ENCODE measurements at regions of chr9 and their contacts with region 1.

Region 1: DNA sequence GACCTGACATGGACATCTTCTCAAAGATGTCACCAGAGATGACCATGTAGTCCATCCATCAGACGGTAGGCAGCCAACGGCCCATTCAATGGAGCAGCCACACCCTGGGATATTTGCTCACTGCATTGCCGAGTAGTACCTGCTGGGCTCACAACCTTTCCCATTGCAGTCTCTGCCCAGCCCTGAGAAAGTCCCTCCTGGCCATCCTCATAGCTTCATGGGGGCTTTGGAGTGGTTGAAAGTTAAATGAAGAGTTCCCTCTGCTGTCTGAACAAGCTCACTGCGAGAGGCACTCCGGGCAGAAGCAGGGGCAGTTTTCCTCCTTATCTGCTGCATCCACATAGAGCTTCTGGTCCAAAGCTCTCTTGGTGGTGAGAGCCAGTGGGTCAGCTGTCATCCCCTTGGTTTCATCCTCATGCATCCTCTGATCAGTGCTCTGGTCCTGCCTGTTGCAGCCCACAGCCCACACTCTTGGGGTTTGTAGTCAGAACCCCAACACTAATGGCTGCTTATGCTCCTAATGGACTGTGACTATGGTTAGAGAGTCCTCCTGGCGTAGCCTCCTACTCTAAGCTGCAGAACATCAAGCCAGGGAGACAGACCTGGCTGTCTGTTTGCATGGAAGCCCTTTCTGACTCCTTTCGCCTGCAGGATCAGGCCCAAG is 23.4 kb downstream of the TNFSF8 start:
- DNase-seq: no peak
- H3K4me3 ChIP-seq: no peak overlapping the region
- CTCF ChIP-seq: peak; percentile 75

Region 2: GRCh38 chr9:114405294-114406034 is 501.6 kb before region 1 on chr9:
- CTCF ChIA-PET with region 1: interaction called, 17 read pairs
- POLR2A ChIA-PET with region 1: no interaction called
- DNase-seq: no peak
- H3K4me3 ChIP-seq: no peak overlapping the region
- CTCF ChIP-seq: peak; percentile 82

Region 3: GRCh38 chr9:114671605-114672004 is 235.4 kb before region 1 on chr9:
- CTCF ChIA-PET with region 1: interaction called, 333 read pairs
- POLR2A ChIA-PET with region 1: no interaction called
- DNase-seq: no peak
- H3K4me3 ChIP-seq: no peak overlapping the region
- CTCF ChIP-seq: no peak

Region 4: DNA sequence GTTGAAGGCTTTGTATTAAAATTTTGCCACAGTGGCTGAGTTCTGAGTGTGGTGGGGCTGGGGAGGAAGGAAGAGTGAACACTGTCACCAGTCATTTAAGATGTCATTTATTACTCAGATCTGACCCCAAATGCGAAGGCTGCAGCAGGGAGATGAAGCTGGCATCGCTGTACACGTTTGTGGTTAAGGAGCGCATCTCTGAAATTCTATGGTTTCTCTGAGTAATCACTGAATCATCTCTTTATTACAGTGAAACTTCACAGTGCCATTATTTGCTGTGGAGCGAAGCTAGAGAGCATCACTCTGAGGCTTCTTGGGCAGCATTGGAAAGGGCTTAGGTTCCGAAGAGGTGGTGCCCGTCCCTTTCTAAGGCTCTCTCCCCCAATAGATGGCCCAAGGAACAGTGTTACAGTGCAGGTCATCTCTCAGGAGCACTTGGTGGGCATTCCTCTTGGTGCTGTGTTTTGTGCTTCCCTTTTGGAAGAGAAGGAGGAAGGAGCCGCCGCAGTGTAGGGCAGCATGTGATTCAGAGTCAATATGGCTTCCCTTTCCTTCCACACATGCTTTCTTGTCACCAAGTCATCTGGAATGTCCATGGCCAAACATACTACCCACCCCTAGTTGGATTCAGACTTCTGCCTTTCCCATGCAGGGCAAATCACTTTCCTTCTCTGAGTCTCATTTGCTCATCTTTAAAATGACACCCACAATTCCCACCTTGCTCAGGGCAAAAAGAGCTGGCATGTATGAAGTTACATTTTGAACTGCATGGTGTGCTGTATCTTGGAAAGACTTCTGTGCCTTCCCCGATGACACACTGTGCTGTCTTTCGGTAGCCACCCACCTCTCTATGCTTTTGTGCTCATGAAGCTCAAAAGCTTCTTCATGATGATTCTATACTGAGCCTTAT is 215.7 kb before region 1 on chr9:
- CTCF ChIA-PET with region 1: interaction called, 12 read pairs
- POLR2A ChIA-PET with region 1: no interaction called
- DNase-seq: peak; percentile 52
- H3K4me3 ChIP-seq: no peak overlapping the region; the same call in 1 of the 2 replicates
- CTCF ChIP-seq: no peak

Region 5: DNA sequence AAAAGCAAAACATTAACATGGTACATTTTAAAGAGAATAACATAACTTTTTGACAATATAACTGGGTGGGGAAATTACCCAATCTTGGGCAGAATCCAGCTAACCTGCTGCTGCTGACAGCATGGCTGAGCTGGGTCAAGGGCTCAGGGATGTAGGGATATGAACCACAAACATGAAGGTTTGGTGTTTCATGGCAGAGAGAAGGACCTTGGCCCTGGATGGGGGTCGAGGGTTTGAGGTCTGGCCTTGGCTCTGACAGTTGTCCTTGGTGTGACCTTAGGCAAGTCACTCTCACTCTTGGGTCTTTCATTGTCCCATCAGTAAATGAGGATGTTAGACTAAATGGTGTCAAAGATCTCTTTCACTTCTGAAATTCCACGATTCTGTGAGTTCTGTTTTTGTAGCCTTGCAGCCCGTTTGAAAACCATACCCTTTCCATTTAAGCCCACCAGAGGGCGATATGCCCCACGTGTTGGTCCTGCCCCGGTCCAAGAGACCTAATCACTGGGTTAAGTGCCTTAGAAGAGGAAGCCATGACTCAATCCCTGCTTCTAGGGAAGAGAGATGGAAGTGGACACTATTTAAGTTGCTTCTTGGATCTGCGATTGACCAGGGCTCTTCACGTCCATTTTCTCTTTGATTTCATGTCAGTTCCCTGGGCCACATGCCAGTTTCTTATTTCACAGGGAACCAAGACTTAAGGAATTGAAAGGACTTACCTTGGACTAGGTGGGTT is 168.3 kb before region 1 on chr9:
- CTCF ChIA-PET with region 1: interaction called, 578 read pairs
- POLR2A ChIA-PET with region 1: interaction called, 3 read pairs
- DNase-seq: no peak
- H3K4me3 ChIP-seq: no peak overlapping the region
- CTCF ChIP-seq: peak; percentile 63

Region 6: DNA sequence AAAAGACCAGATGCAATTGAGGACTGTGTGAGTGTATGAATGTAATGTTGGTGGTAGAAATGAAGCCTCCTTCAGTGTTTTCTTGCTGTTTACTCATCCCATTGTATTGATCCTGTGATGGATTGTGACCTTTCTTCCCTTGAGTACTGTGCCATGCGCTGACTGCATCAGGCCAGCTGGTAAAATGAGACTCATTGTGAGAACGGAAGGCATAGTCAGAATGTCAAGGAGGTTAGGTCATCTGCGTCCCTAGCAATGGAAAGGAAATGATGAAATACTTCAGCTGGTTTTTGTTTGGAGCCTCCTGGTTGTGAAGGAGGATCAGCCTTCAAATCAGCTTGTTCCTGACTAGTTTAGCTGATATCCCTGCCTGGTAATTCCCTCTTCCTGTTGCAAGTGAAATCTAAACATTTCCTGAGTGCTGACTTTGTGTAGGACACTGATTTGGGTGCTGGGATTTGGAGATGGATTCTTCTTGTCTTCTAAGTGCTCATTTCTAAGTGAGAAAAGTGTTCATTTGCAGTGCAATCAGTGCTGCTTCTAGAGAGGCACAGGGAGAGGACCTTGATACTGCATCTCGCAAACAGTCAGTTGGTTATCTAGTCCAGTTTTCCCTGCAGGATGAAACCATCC is 12.1 kb before region 1 on chr9:
- CTCF ChIA-PET with region 1: interaction called, 32 read pairs
- POLR2A ChIA-PET with region 1: interaction called, 3 read pairs
- DNase-seq: peak; percentile 85
- H3K4me3 ChIP-seq: no peak overlapping the region
- CTCF ChIP-seq: no peak

Region 7: DNA sequence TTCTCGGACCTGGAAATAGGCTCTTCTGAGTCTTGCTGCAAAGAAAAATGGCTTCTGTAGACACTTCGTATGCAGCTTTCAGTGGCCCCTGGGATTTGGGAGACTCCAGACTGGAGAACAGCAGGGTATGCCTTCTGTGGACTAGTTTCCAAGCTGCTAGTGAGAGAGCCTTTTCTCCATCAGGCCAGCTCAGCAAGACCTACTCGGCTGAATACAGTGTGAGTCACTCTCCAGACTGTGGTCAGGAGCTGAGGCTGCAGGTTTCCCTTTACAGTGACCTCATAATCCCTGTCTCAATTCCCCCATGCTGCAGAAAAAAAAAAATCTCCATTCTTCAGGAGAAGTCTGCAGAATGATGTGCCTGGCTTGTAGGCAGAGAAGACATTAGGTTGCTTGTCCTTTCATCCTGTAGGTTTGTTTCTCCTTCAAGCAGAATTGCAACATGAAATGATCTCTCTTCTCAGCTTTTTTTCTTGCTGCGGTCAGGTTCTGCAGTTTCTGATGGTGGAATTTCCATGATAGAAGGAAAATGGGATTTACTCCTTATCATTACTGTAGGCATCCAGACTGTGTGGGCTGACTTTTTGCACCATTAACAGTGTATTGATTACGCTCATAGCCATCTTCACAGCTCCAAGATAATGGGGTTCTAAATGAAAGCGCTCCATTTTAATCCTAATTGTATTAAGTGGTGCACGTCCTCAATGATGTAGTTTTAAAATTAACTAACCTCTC is 101.7 kb after region 1 on chr9:
- CTCF ChIA-PET with region 1: interaction called, 98 read pairs
- POLR2A ChIA-PET with region 1: no interaction called
- DNase-seq: peak; percentile 65
- H3K4me3 ChIP-seq: no peak overlapping the region
- CTCF ChIP-seq: no peak

Region 8: DNA sequence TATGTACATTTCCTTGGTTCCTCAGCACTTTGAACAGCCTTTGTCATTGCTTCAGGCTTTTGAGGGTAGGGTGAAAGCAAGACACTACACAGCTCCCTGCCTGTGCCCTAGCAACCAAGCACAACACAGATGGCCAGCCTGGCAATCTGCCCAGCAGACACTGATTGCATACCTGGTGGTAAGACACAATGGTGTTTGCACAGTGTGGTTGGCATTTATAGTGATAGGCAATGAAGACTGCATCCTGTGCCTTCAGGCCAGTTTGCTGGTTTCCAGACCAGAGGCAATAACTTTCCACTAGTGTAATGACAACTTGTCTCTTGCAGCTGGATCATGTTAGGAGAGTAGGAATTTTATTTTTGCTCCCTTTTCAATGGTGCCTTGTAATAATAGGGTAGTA is 355.4 kb after region 1 on chr9:
- CTCF ChIA-PET with region 1: no interaction called
- POLR2A ChIA-PET with region 1: no interaction called
- DNase-seq: peak; percentile 68
- H3K4me3 ChIP-seq: no peak overlapping the region
- CTCF ChIP-seq: no peak

Measured in AG04449 (cell line).